HEK293 (cell line): ENCODE measurements at regions of chr1 and their contacts with region 1.

Region 1: GRCh38 chr1:11515368-11516300 is 36.7 kb downstream of the DISP3 start:
- H3K4me3 ChIP-seq: no peak overlapping the region
- H3K27ac ChIP-seq: no peak overlapping the region
- H3K4me1 ChIP-seq: no peaks in the 10 kb centered on the region
- CTCF ChIP-seq: no peak

Region 2: GRCh38 chr1:11388617-11389016 is 127.0 kb before region 1 on chr1:
- CTCF ChIA-PET with region 1: no interaction called
- POLR2A ChIA-PET with region 1: interaction called, 10 read pairs
- H3K4me3 ChIP-seq: no peak overlapping the region
- H3K27ac ChIP-seq: no peak overlapping the region
- H3K4me1 ChIP-seq: no peaks in the 10 kb centered on the region
- CTCF ChIP-seq: no peak

Region 3: GRCh38 chr1:11501558-11501897 is 14.1 kb before region 1 on chr1:
- CTCF ChIA-PET with region 1: no interaction called
- POLR2A ChIA-PET with region 1: no interaction called
- H3K4me3 ChIP-seq: no peak overlapping the region
- H3K27ac ChIP-seq: no peak overlapping the region
- H3K4me1 ChIP-seq: no peaks in the 10 kb centered on the region
- CTCF ChIP-seq: no peak